ENCODE measurements at regions of chr4 and their contacts with region 1.

Region 1: GRCh38 chr4:86043755-86044592 is 315.9 kb downstream of the MAPK10 start:
- DNase-seq: no peak
- ATAC-seq: peak; percentile 68
- H3K4me3 ChIP-seq: no peak overlapping the region
- H3K27ac ChIP-seq: no peak overlapping the region
- H3K4me1 ChIP-seq: no peaks in the 10 kb centered on the region
- H3K27me3 ChIP-seq: no peaks in the 10 kb centered on the region

Region 2: DNA sequence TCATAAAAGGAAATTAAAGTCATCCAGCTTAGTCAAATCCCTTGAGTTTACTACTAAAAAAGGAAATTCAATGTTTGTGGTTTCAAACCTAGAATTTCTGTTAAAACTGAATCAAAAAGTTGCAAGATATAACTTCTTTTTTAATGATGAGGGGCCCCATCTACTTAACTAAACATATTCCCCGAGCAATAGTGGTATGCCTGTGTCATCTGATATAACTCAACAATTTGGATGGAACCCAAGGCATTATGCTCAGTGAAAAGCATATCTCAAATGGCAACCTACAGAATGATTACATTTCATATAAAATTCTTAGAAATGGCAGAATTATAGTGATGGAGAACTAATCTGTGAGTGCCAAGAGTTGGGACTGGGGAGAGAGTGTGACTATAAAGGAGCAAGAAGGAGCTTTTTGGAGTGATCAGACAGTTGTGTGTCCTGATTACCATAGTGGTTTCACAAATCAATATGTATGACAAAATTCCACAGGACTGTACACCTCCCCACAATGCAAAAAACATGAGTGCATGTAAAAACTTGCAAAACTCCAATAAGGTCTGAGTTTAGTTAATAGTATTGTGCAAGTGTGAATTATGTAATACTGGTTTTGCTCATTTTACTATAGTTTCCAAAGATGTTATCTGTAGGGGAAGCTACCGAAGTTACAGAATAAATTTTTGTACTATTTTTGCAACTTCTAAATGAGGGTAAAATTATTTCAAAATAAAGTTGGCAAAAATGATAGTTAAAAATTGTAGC is 245.8 kb before region 1 on chr4:
- intact Hi-C with region 1: loop called (anchors 2 to 5 kb)
- DNase-seq: no peak
- ATAC-seq: no peak
- H3K4me3 ChIP-seq: no peak overlapping the region
- H3K27ac ChIP-seq: no peak overlapping the region
- H3K4me1 ChIP-seq: peaks cover 0 to 1% of the 10 kb centered on the region in 2 donors
- H3K27me3 ChIP-seq: no peaks in the 10 kb centered on the region

Region 3: GRCh38 chr4:86508436-86508835 is 464.5 kb after region 1 on chr4:
- intact Hi-C with region 1: no loop called
- DNase-seq: no peak
- ATAC-seq: no peak
- H3K4me3 ChIP-seq: no peak overlapping the region
- H3K27ac ChIP-seq: no peak overlapping the region
- H3K4me1 ChIP-seq: peaks cover 0 to 4% of the 10 kb centered on the region in 2 donors
- H3K27me3 ChIP-seq: no peaks in the 10 kb centered on the region